GM13977 (cell line): ENCODE measurements at regions of chr2 and their contacts with region 1.

Region 1: DNA sequence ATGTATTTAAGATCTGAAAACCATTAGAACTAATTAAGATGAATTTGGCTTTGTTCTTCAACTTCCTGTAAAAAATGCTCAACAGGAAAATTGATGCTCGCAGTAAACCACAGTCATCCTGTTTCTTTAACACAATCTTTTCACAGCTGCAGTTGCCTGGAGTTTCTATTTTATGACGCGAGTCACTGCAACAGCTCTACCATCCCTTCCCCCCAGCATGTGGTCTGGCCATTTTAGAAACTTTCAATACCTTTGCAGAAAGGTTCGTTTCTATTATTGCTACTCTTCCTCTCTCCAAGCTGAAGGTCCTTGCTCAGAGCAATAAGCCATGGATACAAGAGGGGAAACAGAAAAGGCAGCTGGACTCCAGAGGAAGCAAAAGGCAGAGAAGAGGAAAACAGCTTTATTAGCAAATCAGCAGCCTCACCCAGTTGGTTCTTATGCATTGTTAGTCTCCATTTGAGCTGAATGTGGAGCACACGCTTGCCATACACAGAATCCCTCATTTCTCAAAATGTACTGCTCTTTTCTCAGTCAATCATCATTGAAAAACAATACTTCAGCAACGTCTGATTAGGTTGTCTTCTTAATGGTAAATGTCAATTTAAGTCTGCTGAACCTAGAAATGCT is 3.9 kb downstream of the WIPF1 start:
- DNase-seq: no peak
- CTCF ChIP-seq: no peak

Region 2: DNA sequence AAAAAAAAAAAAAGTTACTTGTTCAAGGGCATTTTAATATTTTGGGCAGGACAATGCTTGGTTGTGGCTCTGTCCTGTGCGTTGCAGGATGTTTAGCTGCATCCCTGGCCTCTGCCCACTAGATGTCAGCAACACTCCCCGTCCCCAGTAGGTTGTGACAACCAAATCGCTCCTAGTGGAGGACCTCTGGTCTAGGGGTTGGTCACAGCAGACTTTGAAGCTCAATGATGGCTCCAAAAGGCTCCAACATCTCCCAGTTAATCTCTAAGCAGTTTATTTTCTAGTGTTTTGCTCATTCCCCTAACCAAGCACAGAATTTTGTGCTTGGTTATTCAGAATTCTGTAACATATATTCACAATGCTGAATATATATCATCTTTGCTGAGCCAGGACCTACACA is 103.6 kb after region 1 on chr2:
- in situ Hi-C with region 1: loop called (anchors 25 kb)
- DNase-seq: peak; percentile 77
- CTCF ChIP-seq: peak; percentile 85